Motor neuron (in vitro differentiated cells): ENCODE measurements at regions of chr5 and their contacts with region 1.

Region 1: DNA sequence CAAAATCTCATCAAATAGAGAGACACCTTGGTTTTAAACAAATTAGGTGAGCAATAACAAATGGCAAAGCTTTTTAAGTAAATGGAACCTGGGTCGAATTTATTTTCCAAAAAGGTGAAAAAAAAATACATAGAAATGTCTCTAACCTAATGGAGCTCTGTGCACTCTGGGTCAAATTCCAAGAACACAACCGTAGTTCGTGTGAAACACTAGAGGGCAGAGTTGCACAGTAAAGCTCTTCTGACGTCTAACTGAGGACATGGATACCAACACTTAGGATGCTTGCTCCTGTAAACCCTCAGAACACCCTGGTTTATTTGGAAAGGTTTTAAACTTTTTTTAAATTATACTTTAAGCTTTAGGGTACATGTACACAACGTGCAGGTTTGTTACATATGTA is 18.9 kb downstream of the MARCHF11 start:
- ATAC-seq: peak; percentile 79 to 98 (median 85)
- H3K4me3 ChIP-seq: no peak overlapping the region
- H3K27ac ChIP-seq: no peak overlapping the region
- H3K4me1 ChIP-seq: no peaks in the 10 kb centered on the region

Region 2: DNA sequence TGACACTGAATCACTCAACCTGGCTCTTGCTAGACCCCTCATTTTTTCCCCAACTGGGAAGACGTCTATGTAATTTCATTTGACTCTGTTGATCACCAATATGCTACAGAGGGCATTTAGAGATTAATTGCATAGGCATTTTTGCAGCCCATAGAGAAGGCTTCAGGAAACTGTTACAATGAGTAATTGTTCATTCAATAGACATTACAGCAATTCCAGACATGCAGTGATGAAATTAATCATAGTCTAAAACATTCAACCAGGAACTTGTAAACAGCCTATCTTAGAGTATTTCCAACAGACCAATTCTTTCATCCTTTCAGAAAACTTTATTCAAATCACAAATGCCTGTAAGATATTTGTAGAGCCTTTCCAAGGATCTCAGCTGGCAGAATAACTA is 103.4 kb before region 1 on chr5:
- in situ Hi-C with region 1: no loop called
- ATAC-seq: peak in 3 of 8 experiments; percentile 29 to 46 (median 41)
- H3K4me3 ChIP-seq: no peak overlapping the region
- H3K27ac ChIP-seq: no peak overlapping the region
- H3K4me1 ChIP-seq: peaks cover 3 to 11% of the 10 kb centered on the region in 2 donors

Region 3: GRCh38 chr5:16437974-16438373 is 277.3 kb after region 1 on chr5:
- in situ Hi-C with region 1: loop called in 1 of 9 experiments (anchors 25 kb)
- ATAC-seq: no peak
- H3K4me3 ChIP-seq: no peak overlapping the region
- H3K27ac ChIP-seq: no peak overlapping the region
- H3K4me1 ChIP-seq: peaks cover 2 to 7% of the 10 kb centered on the region in 2 donors

Region 4: DNA sequence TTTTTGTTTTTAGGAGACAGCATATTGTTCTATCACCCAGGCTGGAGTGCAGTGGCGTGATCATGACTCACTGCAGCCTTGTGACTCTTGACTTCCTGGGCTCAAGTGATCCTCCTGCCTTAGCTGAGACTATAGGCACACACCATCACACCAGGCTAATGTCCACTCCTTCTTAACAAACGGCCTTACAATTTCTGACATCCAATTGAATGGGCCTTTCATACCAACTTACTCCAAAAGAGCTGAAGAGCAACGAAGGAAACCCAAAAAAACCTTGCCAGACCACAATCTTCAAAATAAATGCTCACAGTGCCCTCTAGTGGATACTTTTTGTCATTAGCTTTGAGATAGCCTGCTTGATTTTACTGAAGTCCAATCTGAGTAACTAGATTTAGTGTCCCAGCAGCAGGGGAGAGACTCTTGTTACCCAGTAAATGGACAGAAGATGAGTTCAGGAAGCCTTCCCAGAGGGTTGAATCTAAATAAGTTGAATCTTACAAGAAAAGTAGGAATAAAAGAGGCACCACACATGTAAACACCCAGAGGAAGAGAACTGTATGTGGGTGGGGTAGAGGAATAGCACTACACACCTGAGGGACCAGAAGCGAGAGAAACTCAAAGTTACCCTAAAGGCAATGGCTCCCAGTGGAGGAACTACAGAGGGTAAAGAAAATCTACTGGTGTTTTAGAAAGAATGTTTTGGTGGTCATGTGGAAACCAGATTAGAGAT is 295.6 kb after region 1 on chr5:
- in situ Hi-C with region 1: loop called in 5 of 9 experiments (anchors 10 to 25 kb)
- ATAC-seq: peak; percentile 62 to 97 (median 95)
- H3K4me3 ChIP-seq: no peak overlapping the region
- H3K27ac ChIP-seq: no peak overlapping the region
- H3K4me1 ChIP-seq: peaks cover 0 to 10% of the 10 kb centered on the region in 2 donors

Region 5: GRCh38 chr5:16465544-16466466 is 305.1 kb after region 1 on chr5 and contains the start of gene ZNF622:
- in situ Hi-C with region 1: loop called in 4 of 9 experiments (anchors 25 kb)
- ATAC-seq: peak; percentile 86 to 97 (median 96)
- H3K4me3 ChIP-seq: peak within 1 kb of the TSS; percentile 69 to 75 (median 72)
- H3K27ac ChIP-seq: peak within 1 kb of the TSS; percentile 77 to 86
- H3K4me1 ChIP-seq: peaks cover 16 to 40% of the 10 kb centered on the region in 2 donors
- total RNA-seq, gene ZNF622: 27.6 to 63.3 (median 53.9) TPM